MCF 10A (cell line): ENCODE measurements at regions of chr22 and their contacts with region 1.

Region 1: GRCh38 chr22:30005213-30005857 is 74.9 kb upstream of the HORMAD2 start:
- DNase-seq: peak; percentile 83
- H3K4me3 Mint-ChIP-seq: no peak overlapping the region
- H3K27ac Mint-ChIP-seq: no peak overlapping the region
- H3K4me1 Mint-ChIP-seq: no peaks in the 10 kb centered on the region
- H3K27me3 Mint-ChIP-seq: no peaks in the 10 kb centered on the region
- CTCF ChIP-seq: peak; percentile 92

Region 2: DNA sequence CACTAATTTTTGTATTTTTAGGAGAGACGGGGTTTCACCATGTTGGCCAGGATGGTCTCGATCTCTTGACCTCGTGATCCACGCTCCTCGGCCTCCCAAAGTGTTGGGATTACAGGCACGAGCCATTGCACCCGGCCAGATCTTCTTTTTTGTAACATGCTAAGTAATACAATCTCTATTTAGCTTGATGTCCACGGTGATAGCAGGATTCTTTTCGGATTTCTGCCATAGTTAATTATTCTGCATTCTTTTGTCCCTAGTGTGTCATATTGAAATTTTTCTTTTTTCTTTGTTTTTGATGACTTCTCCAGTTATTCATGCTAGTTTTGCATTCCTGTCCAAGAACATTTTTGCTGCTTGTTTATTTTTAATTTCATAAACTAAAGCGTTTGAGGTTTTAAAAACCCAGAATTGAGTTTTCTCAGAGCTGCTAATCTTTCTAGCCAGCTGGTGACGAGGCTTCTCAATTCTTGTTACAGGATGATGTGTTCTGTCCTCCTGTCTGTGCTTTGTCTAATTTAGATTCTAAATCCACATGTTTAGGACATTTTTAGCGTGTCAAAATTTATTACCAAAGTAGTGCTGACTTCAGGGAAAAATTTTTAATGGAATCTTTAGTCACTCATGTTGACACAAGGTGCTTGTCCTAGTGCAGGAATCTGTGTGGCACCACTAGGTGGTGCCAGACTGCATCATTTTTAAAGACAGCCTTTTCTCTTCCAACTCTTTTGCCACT is 380.1 kb before region 1 on chr22:
- CTCF ChIA-PET with region 1: interaction called, 10 read pairs
- POLR2A ChIA-PET with region 1: no interaction called
- intact Hi-C with region 1: no loop called
- DNase-seq: peak; percentile 76
- H3K4me3 Mint-ChIP-seq: peak overlapping the region; percentile 11
- H3K27ac Mint-ChIP-seq: peak overlapping the region; percentile 53
- H3K4me1 Mint-ChIP-seq: peaks cover 57% of the 10 kb centered on the region
- H3K27me3 Mint-ChIP-seq: no peaks in the 10 kb centered on the region
- CTCF ChIP-seq: peak; percentile 78

Region 3: DNA sequence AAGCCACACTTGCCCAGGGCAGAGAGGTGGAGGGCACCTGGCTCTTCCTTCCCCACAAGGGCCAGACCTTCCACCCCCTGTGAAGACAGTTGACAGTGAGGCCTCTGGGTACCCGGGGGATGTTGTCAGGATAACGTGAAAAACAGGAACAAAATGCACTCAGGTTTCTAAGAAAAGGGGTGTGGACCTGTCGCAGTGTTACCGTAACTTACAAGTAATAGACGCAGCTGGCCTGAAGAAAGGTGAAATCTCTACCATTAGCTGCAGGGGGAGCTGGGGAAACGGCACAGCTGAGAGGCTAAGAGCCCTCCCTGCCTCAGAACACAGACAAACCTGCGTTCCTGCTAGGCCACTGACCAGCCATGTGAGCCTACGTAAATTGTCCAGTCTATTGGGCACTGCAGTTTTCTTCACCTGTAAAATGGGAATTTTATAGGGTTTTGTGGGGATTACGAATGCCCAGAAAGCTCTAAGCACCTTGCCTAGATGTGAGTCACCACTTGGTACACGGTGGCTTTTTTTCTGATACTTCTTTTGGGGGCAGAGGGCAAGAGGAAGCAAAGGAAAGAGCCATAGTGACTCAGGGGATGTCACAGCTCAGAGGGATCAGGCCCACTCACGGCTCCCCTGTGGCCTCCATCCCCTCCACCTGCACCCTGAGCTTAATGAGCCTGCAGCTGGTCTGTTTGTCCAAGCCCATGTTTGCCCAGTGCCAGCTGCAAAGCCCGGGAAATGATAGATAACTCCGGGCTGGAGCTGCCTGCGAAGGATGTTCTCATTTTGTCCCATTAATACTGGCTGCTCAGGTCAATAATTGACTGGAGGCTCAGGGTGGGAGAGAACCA is 304.0 kb before region 1 on chr22:
- CTCF ChIA-PET with region 1: interaction called, 4 read pairs
- POLR2A ChIA-PET with region 1: no interaction called
- intact Hi-C with region 1: loop called (anchors 5 kb)
- DNase-seq: peak; percentile 25
- H3K4me3 Mint-ChIP-seq: no peak overlapping the region
- H3K27ac Mint-ChIP-seq: no peak overlapping the region
- H3K4me1 Mint-ChIP-seq: no peaks in the 10 kb centered on the region
- H3K27me3 Mint-ChIP-seq: no peaks in the 10 kb centered on the region
- CTCF ChIP-seq: peak; percentile 25

Region 4: GRCh38 chr22:29820961-29821789 is 184.2 kb before region 1 on chr22:
- CTCF ChIA-PET with region 1: interaction called, 7 read pairs
- POLR2A ChIA-PET with region 1: interaction called, 5 read pairs
- intact Hi-C with region 1: loop called (anchors 1 kb)
- DNase-seq: peak; percentile 92
- H3K4me3 Mint-ChIP-seq: peak overlapping the region; percentile 9
- H3K27ac Mint-ChIP-seq: peak overlapping the region; percentile 70
- H3K4me1 Mint-ChIP-seq: peaks cover 16% of the 10 kb centered on the region
- H3K27me3 Mint-ChIP-seq: no peaks in the 10 kb centered on the region
- CTCF ChIP-seq: no peak

Region 5: GRCh38 chr22:30015846-30016245 is 10.5 kb after region 1 on chr22:
- CTCF ChIA-PET with region 1: interaction called, 22 read pairs
- POLR2A ChIA-PET with region 1: interaction called, 3 read pairs
- intact Hi-C with region 1: no loop called
- DNase-seq: no peak
- H3K4me3 Mint-ChIP-seq: no peak overlapping the region
- H3K27ac Mint-ChIP-seq: peak overlapping the region; percentile 36
- H3K4me1 Mint-ChIP-seq: peaks cover 6% of the 10 kb centered on the region
- H3K27me3 Mint-ChIP-seq: no peaks in the 10 kb centered on the region
- CTCF ChIP-seq: no peak

Region 6: GRCh38 chr22:30224161-30224857 is 219.0 kb after region 1 on chr22:
- CTCF ChIA-PET with region 1: no interaction called
- POLR2A ChIA-PET with region 1: no interaction called
- intact Hi-C with region 1: no loop called
- DNase-seq: no peak
- H3K4me3 Mint-ChIP-seq: no peak overlapping the region
- H3K27ac Mint-ChIP-seq: no peak overlapping the region
- H3K4me1 Mint-ChIP-seq: peaks cover 25% of the 10 kb centered on the region
- H3K27me3 Mint-ChIP-seq: no peaks in the 10 kb centered on the region
- CTCF ChIP-seq: no peak